Mammary epithelial cell (primary cell): ENCODE measurements at regions of chr2 and their contacts with region 1.

Region 1: GRCh38 chr2:200603982-200604381 is 18.2 kb downstream of the AOX1 start:
- DNase-seq: peak; percentile 64
- H3K4me3 ChIP-seq: no peak overlapping the region
- H3K27ac ChIP-seq: peak overlapping the region; percentile 35
- H3K4me1 ChIP-seq: peaks cover 29% of the 10 kb centered on the region
- H3K27me3 ChIP-seq: no peaks in the 10 kb centered on the region
- CTCF ChIP-seq: no peak

Region 2: GRCh38 chr2:200483729-200484198 is 120.2 kb before region 1 on chr2:
- CTCF ChIA-PET with region 1: no interaction called
- dilution Hi-C with region 1: no loop called
- in situ Hi-C with region 1: no loop called
- intact Hi-C with region 1: no loop called
- DNase-seq: peak; percentile 62
- H3K4me3 ChIP-seq: no peak overlapping the region
- H3K27ac ChIP-seq: no peak overlapping the region
- H3K4me1 ChIP-seq: peaks cover 27% of the 10 kb centered on the region
- H3K27me3 ChIP-seq: no peaks in the 10 kb centered on the region
- CTCF ChIP-seq: peak; percentile 59 to 81

Region 3: DNA sequence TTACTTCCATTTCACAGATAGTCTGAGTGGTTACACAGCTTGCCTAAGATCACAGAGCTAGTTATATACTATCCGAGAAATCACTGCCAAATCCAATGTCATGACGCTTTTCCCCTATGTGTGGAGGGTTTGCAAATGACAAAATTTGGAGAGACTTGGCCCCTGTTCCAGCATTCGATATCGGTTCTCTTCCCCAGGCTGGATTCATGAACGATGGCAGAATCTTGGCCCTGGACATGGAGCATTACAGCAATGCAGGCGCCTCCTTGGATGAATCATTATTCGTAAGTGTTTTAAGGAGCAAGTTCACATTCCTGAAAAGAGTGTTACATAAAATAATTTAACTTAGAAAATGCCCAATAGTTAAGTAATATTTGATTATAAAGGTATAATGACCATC is 36.9 kb after region 1 on chr2:
- CTCF ChIA-PET with region 1: no interaction called
- dilution Hi-C with region 1: loop called (anchors 5 kb)
- in situ Hi-C with region 1: no loop called
- intact Hi-C with region 1: no loop called
- DNase-seq: no peak
- H3K4me3 ChIP-seq: no peak overlapping the region
- H3K27ac ChIP-seq: no peak overlapping the region
- H3K4me1 ChIP-seq: peaks cover under 1% of the 10 kb centered on the region
- H3K27me3 ChIP-seq: no peaks in the 10 kb centered on the region
- CTCF ChIP-seq: no peak

Region 4: DNA sequence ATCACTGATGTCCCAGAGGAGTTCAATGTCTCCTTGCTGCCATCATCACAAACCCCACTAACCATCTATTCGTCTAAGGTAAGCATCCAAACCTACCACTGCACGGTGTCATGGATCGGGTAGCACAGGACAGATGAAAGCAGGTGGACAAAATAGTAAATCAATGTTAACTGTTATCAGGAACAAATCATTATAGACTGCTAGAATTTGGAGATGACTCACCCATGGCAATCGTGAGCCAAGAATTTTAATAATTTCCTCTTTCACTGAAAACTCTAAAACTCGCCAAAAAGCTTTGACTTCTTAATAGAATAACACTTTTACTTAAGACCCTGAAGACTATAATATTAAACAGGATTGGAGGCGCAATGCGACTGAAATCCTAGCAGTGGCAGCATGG is 174.1 kb after region 1 on chr2:
- CTCF ChIA-PET with region 1: no interaction called
- dilution Hi-C with region 1: no loop called
- in situ Hi-C with region 1: no loop called
- intact Hi-C with region 1: no loop called
- DNase-seq: no peak
- H3K4me3 ChIP-seq: no peak overlapping the region
- H3K27ac ChIP-seq: no peak overlapping the region
- H3K4me1 ChIP-seq: peaks cover 16% of the 10 kb centered on the region
- H3K27me3 ChIP-seq: no peaks in the 10 kb centered on the region
- CTCF ChIP-seq: no peak